BJ (cell line): ENCODE measurements at regions of chr12 and their contacts with region 1.

Region 1: DNA sequence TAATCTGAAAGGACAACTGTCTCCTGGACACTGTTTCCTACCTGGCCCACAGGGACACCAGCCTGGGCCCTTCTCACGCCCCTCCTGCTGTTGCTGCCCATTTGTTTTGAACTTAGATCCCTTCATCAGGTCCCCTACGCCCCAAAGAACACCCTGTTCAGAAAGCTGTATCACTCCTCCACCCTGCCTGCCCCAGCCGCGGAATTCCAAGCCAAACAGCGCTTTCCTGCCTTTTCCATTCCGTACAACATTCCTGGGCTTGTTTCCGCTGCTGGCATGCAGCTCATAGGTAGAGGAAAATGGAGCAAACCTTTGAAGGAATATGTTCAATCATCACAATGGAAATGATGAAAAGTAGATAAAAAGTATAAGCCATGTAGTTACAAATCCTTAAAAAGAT is 12.8 kb upstream of the GSG1 start:
- DNase-seq: no peak
- H3K4me3 ChIP-seq: no peak overlapping the region
- H3K27me3 ChIP-seq: no peaks in the 10 kb centered on the region
- CTCF ChIP-seq: no peak

Region 2: GRCh38 chr12:13100882-13101769 is 15.1 kb before region 1 on chr12:
- CTCF ChIA-PET with region 1: interaction called, 10 read pairs
- POLR2A ChIA-PET with region 1: no interaction called
- DNase-seq: peak; percentile 58
- H3K4me3 ChIP-seq: peak overlapping the region; percentile 35
- H3K27me3 ChIP-seq: no peaks in the 10 kb centered on the region
- CTCF ChIP-seq: no peak

Region 3: GRCh38 chr12:13135371-13136178 is 19.3 kb after region 1 on chr12:
- CTCF ChIA-PET with region 1: no interaction called
- POLR2A ChIA-PET with region 1: no interaction called
- DNase-seq: peak; percentile 74
- H3K4me3 ChIP-seq: no peak overlapping the region
- H3K27me3 ChIP-seq: no peaks in the 10 kb centered on the region
- CTCF ChIP-seq: no peak